ENCODE measurements at regions of chr6 and their contacts with region 1.

Region 1: GRCh38 chr6:41713161-41713649 is 22.2 kb downstream of the TFEB start:
- DNase-seq: no peak
- ATAC-seq: no peak
- H3K4me3 Mint-ChIP-seq: peak overlapping the region; percentile 70
- H3K27ac Mint-ChIP-seq: peak overlapping the region; percentile 90
- H3K4me1 Mint-ChIP-seq: peaks cover 97% of the 10 kb centered on the region
- H3K27me3 Mint-ChIP-seq: no peaks in the 10 kb centered on the region
- CTCF ChIP-seq: no peak

Region 2: GRCh38 chr6:41723530-41724227 is 10.5 kb after region 1 on chr6:
- CTCF ChIA-PET with region 1: interaction called, 12 read pairs
- POLR2A ChIA-PET with region 1: interaction called, 1,669 read pairs
- intact Hi-C with region 1: loop called (anchors 1 kb)
- DNase-seq: peak; percentile 76
- ATAC-seq: peak; percentile 86
- H3K4me3 Mint-ChIP-seq: peak overlapping the region; percentile 92
- H3K27ac Mint-ChIP-seq: peak overlapping the region; percentile 99
- H3K4me1 Mint-ChIP-seq: peaks cover 97% of the 10 kb centered on the region
- H3K27me3 Mint-ChIP-seq: no peaks in the 10 kb centered on the region
- CTCF ChIP-seq: no peak

Region 3: GRCh38 chr6:42175860-42176259 is 462.7 kb after region 1 on chr6:
- CTCF ChIA-PET with region 1: no interaction called
- POLR2A ChIA-PET with region 1: no interaction called
- intact Hi-C with region 1: no loop called
- DNase-seq: no peak
- ATAC-seq: no peak
- H3K4me3 Mint-ChIP-seq: no peak overlapping the region
- H3K27ac Mint-ChIP-seq: no peak overlapping the region
- H3K4me1 Mint-ChIP-seq: peaks cover 5% of the 10 kb centered on the region
- H3K27me3 Mint-ChIP-seq: no peaks in the 10 kb centered on the region
- CTCF ChIP-seq: no peak

Region 4: DNA sequence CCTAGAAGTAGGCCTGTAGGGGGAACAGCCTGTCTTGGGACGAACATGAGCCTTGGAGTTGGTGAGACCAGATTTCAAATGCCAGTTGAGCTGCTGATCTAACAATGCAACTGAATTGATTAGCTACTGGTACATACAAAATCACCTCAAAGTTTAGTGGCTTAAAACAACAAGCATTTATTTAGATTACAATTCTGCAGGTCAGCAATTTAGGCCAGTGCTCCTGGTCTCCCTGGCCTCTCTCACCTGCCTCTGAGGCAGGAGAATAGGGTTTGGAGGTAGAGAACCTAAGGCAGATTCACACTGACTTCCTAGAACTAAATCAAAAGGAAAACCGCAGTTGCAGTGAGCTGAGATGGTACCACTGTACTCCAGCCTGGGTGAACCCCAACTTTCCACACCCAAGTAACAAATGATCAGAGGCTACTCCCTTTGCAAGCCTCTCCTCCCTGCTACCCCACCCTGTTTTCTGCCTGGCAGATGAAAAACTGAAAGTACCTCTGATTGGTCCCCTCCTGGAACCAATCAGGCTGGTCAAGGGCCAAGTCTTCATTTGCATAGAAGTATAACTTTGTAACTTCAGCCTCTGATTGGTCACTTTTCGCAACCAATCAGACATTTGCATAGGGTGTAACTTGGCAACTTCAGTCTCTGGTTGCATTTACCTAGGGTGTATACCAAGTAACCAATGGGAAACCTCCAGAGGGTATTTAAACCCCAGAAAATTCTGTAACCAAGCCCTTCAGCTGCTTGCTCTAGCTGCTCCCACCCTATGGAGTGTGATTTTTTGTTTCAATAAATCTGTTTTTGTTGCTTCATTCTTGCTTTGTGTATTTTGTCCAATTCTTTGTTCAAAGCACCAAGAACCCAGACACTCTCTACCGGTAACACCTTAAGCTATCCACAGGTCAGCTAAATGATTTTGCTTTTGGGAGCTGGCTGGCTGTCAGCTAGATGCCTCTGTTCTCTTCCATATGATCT is 842.6 kb after region 1 on chr6:
- CTCF ChIA-PET with region 1: no interaction called
- POLR2A ChIA-PET with region 1: no interaction called
- intact Hi-C with region 1: no loop called
- DNase-seq: no peak
- ATAC-seq: peak; percentile 34
- H3K4me3 Mint-ChIP-seq: no peak overlapping the region
- H3K27ac Mint-ChIP-seq: no peak overlapping the region
- H3K4me1 Mint-ChIP-seq: peaks cover 4% of the 10 kb centered on the region
- H3K27me3 Mint-ChIP-seq: no peaks in the 10 kb centered on the region
- CTCF ChIP-seq: no peak

Measured in activated B cell treated with CpG ODN at 0.5 μM for 24 hours (primary cell).